ENCODE measurements at regions of chr13 and their contacts with region 1.

Region 1: DNA sequence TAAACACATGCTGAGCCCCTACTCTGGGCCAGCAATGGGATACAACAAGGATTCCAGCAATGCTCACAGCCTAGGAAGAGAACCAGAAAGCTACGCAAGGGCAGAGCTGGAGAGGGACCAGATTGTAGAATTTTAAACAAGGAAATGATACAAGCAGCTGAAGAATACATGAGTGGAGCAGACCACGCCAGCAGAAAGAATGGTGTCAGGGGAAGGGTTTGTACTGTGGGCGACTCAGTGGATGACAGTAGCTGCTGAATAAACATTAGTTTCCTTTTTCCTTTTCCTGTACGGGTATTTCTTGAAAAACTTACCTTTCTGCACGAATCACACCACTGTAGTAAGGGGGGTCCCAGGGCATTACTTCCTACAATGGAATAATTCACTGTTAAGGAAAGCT is 30.7 kb downstream of the MIPEP start:
- DNase-seq: peak; percentile 41
- ATAC-seq: peak; percentile 48
- H3K4me3 ChIP-seq: peak overlapping the region; percentile 2; the same call in 1 of the 2 replicates
- H3K27ac ChIP-seq: peak overlapping the region; percentile 93
- H3K4me1 ChIP-seq: peaks cover 33% of the 10 kb centered on the region
- H3K27me3 ChIP-seq: no peaks in the 10 kb centered on the region
- CTCF ChIP-seq: no peak

Region 2: DNA sequence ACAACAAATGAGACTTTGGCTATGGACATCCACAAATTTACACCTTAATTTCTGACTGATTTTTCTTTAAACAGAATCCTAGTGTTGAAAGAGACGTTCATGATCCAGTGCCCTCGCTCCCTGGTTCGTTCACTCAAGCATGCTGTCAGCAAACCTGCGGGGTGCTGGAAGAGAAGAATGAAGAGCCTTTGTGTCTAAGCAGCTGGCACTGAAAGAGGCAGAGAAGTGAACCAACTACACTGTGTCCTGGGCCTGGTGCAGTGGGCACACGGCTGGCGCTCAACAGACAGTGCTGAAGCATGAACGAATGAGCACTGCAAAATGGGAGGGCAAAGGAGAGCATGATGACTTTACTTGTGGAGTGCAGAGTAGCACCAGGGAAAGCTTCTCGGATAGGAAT is 16.1 kb before region 1 on chr13:
- CTCF ChIA-PET with region 1: no interaction called
- POLR2A ChIA-PET with region 1: interaction called, 4 read pairs
- intact Hi-C with region 1: loop called (anchors 2 kb)
- DNase-seq: no peak
- ATAC-seq: no peak
- H3K4me3 ChIP-seq: no peak overlapping the region
- H3K27ac ChIP-seq: no peak overlapping the region
- H3K4me1 ChIP-seq: no peaks in the 10 kb centered on the region
- H3K27me3 ChIP-seq: no peaks in the 10 kb centered on the region
- CTCF ChIP-seq: no peak

Measured in PC-3 (cell line).